ENCODE measurements at regions of chr19 and their contacts with region 1.

Region 1: DNA sequence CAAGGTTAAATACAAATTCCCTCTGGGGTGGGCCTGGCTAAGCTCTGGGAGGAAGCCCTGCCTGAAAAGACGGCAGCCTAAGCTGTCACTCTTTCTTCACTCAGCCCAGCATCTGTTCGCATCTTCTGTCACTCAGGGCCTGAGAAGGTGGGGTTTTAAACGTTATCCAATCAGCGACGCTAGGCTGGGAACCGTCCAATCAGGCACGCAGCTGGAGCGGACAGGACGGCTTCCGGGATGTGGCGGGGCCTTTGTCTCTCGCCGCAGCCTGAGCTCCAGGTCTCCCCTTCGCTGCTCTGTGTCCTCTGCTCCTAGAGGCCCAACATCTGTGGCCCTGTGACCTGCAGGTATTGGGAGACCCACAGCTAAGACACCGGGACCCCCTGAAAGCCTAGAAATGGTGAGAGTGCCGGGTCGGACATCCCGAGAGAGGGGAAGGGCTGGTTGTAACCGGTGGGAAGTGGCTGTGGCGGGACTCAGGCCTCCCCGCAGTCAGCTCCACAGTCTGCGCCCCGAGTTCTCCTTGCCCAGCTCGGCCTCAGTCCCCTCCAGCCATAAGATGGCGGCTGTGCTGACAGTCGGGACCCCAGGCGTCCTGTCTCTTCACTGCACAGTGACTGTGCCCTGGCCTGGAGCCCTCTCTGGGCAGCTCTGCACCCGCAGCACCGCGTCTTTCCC is at the start of gene ZNF431:
- DNase-seq: peak; percentile 89
- total RNA-seq, gene ZNF431: 1.7 and 4.4 TPM in 2 replicates

Region 2: GRCh38 chr19:21082011-21082975 is 59.6 kb before region 1 on chr19 and contains the start of gene ZNF714:
- in situ Hi-C with region 1: loop called (anchors 10 kb)
- DNase-seq: peak; percentile 95
- total RNA-seq, gene ZNF714: 13.2 and 13.5 TPM in 2 replicates

Region 3: GRCh38 chr19:21474671-21475181 is 332.8 kb after region 1 on chr19:
- in situ Hi-C with region 1: no loop called
- DNase-seq: peak; percentile 21